Activated CD4-positive, alpha-beta T cell treated with anti-CD3 and anti-CD28 coated beads, Interleukin-2, amount 10 ng/mL, durations not matched to agents 7 days and 5 days (primary cell): ENCODE measurements at regions of chr14 and their contacts with region 1.

Region 1: DNA sequence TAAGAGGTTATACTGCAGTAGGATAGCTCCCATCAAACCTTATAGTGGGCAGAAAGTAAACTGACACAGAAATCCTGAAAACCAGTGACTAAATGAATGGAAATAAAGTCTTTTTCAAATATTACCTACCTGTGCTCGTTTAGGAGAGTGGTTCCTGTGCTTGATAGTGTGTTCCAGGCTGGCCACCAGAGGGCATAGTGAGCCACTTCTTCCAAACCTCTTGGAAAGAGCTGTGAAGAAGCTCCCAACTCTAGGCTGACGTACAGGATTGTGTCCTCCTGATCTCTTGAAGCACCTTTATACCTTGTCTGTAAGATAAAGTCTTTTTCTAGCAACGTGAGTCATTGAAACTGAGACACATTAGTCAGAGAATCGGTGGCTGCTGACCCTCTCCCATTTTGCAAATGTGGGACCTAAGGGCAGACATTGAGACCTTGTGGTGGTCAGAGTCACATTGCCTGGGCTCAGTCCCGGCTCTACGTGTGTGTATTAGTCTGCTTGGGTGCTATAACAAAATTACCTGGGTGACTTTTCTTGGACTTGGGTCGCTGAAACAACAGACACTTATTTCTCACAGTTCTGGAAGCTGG is 17.6 kb downstream of the TDP1 start:
- DNase-seq: peak; percentile 65
- H3K4me3 Mint-ChIP-seq: no peak overlapping the region
- H3K27ac Mint-ChIP-seq: no peak overlapping the region
- H3K4me1 Mint-ChIP-seq: no peaks in the 10 kb centered on the region
- H3K27me3 Mint-ChIP-seq: no peaks in the 10 kb centered on the region

Region 2: GRCh38 chr14:89986462-89987160 is 13.3 kb after region 1 on chr14:
- CTCF ChIA-PET with region 1: interaction called, 11 read pairs
- POLR2A ChIA-PET with region 1: no interaction called
- DNase-seq: no peak
- H3K4me3 Mint-ChIP-seq: no peak overlapping the region
- H3K27ac Mint-ChIP-seq: no peak overlapping the region
- H3K4me1 Mint-ChIP-seq: no peaks in the 10 kb centered on the region
- H3K27me3 Mint-ChIP-seq: no peaks in the 10 kb centered on the region